MCF 10A (cell line): ENCODE measurements at regions of chr3 and their contacts with region 1.

Region 1: DNA sequence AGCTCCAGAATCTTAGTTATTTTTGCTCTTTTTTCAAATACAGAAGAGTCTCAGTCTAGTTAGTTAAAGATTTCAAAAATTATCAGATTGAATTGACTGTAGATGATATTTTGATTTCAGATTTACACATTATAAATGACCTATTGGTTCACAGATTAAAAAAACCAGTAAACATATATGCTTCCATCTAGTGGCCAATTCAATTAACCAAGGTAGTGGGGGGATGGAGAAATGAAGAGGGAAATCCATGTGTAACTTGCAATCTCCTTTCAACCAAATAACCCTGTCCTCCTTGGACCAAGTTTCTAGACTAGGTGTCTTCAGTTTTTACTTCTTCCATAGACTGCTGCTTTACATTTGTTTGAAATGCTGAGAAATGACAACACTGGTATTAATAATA is 789.8 kb downstream of the ROBO1 start:
- DNase-seq: peak; percentile 50
- H3K4me3 Mint-ChIP-seq: no peak overlapping the region
- H3K27ac Mint-ChIP-seq: no peak overlapping the region
- H3K4me1 Mint-ChIP-seq: no peaks in the 10 kb centered on the region
- H3K27me3 Mint-ChIP-seq: no peaks in the 10 kb centered on the region
- CTCF ChIP-seq: peak; percentile 40

Region 2: DNA sequence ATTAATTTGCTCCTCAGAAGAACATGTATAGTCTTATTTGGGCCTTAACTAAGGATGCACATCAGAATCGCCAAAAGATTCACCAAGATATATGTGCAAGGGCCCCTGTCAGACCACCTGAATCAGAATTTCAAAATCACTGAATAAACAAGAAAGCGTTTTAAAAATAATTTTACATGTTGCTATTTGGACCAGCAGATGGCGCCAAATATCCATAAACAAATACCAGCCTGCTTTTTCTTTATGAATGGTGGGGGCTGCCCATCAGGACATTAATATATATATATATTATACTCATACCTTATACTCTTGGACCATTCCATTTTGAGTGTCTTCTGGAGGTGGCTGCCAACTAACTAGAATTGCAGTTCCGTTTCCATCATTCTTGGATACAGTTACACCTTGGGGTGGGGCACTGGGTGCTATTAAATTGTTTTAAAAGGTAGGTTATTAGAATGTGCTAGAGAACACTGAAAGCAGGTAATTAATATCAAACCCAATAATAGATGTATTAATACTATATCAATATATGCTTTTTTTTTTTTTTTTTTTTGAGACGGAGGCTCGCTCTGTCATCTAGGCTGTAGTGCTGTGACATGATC is 318.6 kb before region 1 on chr3:
- CTCF ChIA-PET with region 1: interaction called, 69 read pairs
- POLR2A ChIA-PET with region 1: interaction called, 9 read pairs
- intact Hi-C with region 1: loop called (anchors 1 kb)
- DNase-seq: peak; percentile 57
- H3K4me3 Mint-ChIP-seq: no peak overlapping the region
- H3K27ac Mint-ChIP-seq: no peak overlapping the region
- H3K4me1 Mint-ChIP-seq: no peaks in the 10 kb centered on the region
- H3K27me3 Mint-ChIP-seq: no peaks in the 10 kb centered on the region
- CTCF ChIP-seq: peak; percentile 63

Region 3: DNA sequence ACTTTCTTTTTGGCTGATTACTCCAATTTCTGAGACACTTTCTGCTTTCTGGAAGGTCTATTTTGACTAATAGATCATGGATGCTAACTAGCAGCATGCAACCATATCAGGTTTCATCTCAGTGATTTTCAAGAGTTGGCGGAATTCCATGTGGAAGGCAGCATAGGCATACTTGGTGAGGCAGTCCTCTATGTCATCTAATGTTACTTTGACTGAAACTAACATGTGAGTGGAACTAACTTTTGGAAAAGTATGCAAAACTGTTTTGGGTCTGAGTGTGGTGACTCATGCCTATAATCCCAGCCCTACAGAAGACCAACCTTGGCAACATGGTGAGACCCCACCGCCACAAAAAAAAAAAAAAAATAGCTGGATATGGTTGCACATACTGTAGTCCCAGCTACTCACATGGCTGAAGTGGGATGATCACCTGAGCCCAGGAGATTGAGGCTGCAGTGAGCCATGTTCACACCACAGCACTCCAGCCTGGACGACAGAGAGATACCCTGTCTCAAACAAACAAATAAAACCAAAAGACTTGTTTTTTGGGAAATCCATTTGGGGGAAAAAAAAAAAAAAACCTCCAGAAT is 243.9 kb before region 1 on chr3:
- CTCF ChIA-PET with region 1: no interaction called
- POLR2A ChIA-PET with region 1: no interaction called
- intact Hi-C with region 1: loop called (anchors 10 kb)
- DNase-seq: peak; percentile 75
- H3K4me3 Mint-ChIP-seq: no peak overlapping the region
- H3K27ac Mint-ChIP-seq: no peak overlapping the region
- H3K4me1 Mint-ChIP-seq: peaks cover 24% of the 10 kb centered on the region
- H3K27me3 Mint-ChIP-seq: no peaks in the 10 kb centered on the region
- CTCF ChIP-seq: no peak

Region 4: DNA sequence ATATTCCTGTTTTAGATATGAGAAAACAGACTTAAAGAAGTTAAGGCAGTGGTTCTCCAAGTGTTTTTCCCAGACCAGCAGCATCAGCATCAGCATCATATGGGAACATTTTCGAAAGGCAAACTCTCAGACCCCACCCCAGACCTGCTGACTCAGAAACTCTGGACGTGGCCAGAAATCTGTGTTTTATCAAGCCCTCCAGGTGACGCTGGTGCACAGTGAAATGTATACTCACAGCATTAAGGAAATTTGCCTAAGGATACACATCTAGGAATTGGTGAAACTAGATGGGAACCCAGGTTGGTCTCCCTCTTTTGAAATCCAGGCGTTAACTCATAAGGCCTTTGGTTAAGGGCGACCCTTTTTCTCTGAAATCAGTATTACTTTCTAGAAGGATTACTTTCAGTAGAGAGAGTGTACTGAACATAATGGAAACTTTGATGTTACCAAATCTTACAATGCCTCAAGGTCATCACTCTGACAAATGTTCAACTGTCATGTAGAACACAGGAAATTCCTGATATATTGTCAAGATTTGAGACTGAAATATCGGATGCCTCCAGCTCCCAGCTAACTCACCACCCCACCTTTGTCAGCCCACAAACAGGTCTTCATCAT is 120.4 kb before region 1 on chr3:
- CTCF ChIA-PET with region 1: no interaction called
- POLR2A ChIA-PET with region 1: no interaction called
- intact Hi-C with region 1: loop called (anchors 5 kb)
- DNase-seq: peak; percentile 66
- H3K4me3 Mint-ChIP-seq: no peak overlapping the region
- H3K27ac Mint-ChIP-seq: no peak overlapping the region
- H3K4me1 Mint-ChIP-seq: peaks cover 5% of the 10 kb centered on the region
- H3K27me3 Mint-ChIP-seq: no peaks in the 10 kb centered on the region
- CTCF ChIP-seq: no peak

Region 5: DNA sequence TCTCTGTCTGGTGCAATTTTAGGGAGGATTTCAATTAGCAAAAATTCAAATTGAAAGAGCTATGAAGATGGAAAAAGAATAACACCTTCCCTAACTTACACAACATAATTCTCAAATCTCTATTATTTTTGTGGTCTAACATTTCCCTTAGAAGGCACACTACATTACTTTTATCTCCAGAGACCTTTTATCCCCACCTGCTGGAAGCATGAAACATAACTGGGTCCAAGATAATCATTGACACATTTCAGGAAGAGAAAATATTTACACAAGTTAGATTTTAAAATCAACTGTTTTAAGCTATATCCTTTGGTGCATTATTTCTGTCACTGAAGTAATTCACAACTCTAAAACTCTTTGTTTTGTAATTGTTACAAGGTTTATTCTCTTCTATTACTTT is 10.3 kb after region 1 on chr3:
- CTCF ChIA-PET with region 1: interaction called, 28 read pairs
- POLR2A ChIA-PET with region 1: interaction called, 4 read pairs
- intact Hi-C with region 1: no loop called
- DNase-seq: peak; percentile 29
- H3K4me3 Mint-ChIP-seq: no peak overlapping the region
- H3K27ac Mint-ChIP-seq: no peak overlapping the region
- H3K4me1 Mint-ChIP-seq: no peaks in the 10 kb centered on the region
- H3K27me3 Mint-ChIP-seq: no peaks in the 10 kb centered on the region
- CTCF ChIP-seq: peak; percentile 49

Region 6: GRCh38 chr3:79032686-79033318 is 54.8 kb after region 1 on chr3:
- CTCF ChIA-PET with region 1: interaction called, 3 read pairs
- POLR2A ChIA-PET with region 1: no interaction called
- intact Hi-C with region 1: loop called (anchors 2 kb)
- DNase-seq: peak; percentile 66
- H3K4me3 Mint-ChIP-seq: no peak overlapping the region
- H3K27ac Mint-ChIP-seq: no peak overlapping the region
- H3K4me1 Mint-ChIP-seq: no peaks in the 10 kb centered on the region
- H3K27me3 Mint-ChIP-seq: no peaks in the 10 kb centered on the region
- CTCF ChIP-seq: peak; percentile 53

Region 7: DNA sequence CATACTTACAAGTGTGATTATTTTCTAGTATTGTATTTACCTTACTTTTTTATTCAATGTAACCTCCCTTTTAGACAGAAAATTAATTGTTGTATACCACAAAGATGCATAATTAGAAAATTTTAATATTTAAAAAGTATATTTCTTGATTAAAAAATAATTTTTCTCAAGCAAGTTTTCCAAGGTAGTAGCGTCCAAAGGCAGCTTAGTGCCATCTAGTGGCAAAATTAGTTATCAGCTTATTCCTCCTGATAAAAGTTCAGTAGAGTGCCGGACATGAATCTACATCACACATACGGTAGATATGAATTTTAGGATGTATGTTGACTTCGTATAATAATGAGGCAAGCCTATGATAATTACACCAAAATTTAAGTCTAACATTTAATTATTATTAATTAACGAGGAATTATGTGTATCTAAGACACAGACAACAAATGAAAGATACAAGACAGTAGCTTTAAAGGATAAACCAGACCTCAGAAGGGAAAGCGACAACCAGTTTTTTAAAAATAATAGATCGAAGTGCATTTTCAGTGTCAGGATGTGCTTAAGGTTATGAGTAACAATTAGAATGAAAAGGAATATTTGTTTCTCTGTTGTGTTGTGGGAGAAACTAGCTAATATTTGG is 383.8 kb after region 1 on chr3:
- CTCF ChIA-PET with region 1: no interaction called
- POLR2A ChIA-PET with region 1: no interaction called
- intact Hi-C with region 1: loop called (anchors 2 kb)
- DNase-seq: peak; percentile 50
- H3K4me3 Mint-ChIP-seq: no peak overlapping the region
- H3K27ac Mint-ChIP-seq: no peak overlapping the region
- H3K4me1 Mint-ChIP-seq: no peaks in the 10 kb centered on the region
- H3K27me3 Mint-ChIP-seq: peaks cover 89% of the 10 kb centered on the region
- CTCF ChIP-seq: peak; percentile 74